PC-3 (cell line): ENCODE measurements at regions of chr21 and their contacts with region 1.

Region 1: GRCh38 chr21:26027696-26028095 is 142.9 kb downstream of the APP start:
- DNase-seq: no peak
- ATAC-seq: no peak
- H3K4me3 ChIP-seq: no peak overlapping the region
- H3K27ac ChIP-seq: no peak overlapping the region
- H3K4me1 ChIP-seq: no peaks in the 10 kb centered on the region
- H3K27me3 ChIP-seq: no peaks in the 10 kb centered on the region
- CTCF ChIP-seq: no peak

Region 2: DNA sequence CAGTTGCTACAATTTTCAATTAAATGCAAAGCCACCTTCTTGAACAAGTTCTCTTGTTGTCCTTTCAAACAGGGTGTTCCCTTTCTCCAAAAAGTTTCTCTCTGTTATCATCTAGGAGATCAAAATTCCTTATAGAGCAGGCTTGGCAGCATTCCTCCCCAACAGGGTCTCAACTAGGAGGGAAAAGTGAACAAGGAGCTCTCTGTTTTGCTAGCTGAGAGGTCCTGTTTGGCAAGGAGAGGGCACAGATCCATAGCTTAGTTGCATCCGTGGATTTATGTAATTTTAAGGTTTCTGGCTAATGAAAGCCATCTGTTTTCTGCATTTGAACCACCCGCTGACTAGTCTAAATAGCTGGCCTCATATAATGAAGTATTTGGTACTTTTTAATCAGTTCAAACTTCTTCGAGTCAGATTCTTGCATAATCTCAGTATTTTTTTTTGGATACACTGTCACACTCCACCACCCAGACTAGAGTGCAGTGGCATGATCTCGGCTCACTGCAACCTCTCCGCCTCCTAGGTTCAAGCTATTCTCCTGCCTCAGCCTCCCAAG is 88.8 kb after region 1 on chr21:
- CTCF ChIA-PET with region 1: no interaction called
- POLR2A ChIA-PET with region 1: interaction called, 18 read pairs
- intact Hi-C with region 1: no loop called
- DNase-seq: peak; percentile 84
- ATAC-seq: peak; percentile 51
- H3K4me3 ChIP-seq: peak overlapping the region; percentile 22; the same call in 1 of the 2 replicates
- H3K27ac ChIP-seq: peak overlapping the region; percentile 96
- H3K4me1 ChIP-seq: peaks cover 31% of the 10 kb centered on the region
- H3K27me3 ChIP-seq: no peaks in the 10 kb centered on the region
- CTCF ChIP-seq: no peak

Region 3: DNA sequence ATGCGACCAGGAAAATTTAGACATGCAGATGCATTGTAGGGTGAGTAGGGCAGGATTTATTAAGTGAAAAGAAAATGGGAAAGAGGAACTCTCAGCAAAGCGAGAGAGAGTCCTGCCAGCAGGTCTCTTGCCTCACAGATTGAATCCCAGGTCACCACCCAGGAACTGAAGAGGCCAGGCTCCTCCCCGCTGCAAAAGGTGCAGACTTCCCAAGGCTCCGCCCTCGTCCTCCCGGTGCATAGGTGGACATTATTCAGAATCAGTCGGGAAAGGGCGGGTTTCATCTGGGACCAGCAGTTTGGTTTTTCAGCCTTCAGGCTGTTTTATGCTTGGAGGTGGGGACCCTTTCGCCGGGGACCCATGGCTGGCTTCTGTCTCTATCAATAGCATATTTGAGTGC is 184.5 kb after region 1 on chr21:
- CTCF ChIA-PET with region 1: no interaction called
- POLR2A ChIA-PET with region 1: no interaction called
- intact Hi-C with region 1: no loop called
- DNase-seq: no peak
- ATAC-seq: no peak
- H3K4me3 ChIP-seq: no peak overlapping the region
- H3K27ac ChIP-seq: no peak overlapping the region
- H3K4me1 ChIP-seq: no peaks in the 10 kb centered on the region
- H3K27me3 ChIP-seq: no peaks in the 10 kb centered on the region
- CTCF ChIP-seq: no peak